ENCODE measurements at regions of chr6 and their contacts with region 1.

Region 1: GRCh38 chr6:70520575-70520974 is 46.2 kb upstream of the SDHAF4 start:
- DNase-seq: no peak
- H3K4me3 Mint-ChIP-seq: no peak overlapping the region
- H3K27ac Mint-ChIP-seq: no peak overlapping the region
- H3K4me1 Mint-ChIP-seq: no peaks in the 10 kb centered on the region
- H3K27me3 Mint-ChIP-seq: no peaks in the 10 kb centered on the region

Region 2: DNA sequence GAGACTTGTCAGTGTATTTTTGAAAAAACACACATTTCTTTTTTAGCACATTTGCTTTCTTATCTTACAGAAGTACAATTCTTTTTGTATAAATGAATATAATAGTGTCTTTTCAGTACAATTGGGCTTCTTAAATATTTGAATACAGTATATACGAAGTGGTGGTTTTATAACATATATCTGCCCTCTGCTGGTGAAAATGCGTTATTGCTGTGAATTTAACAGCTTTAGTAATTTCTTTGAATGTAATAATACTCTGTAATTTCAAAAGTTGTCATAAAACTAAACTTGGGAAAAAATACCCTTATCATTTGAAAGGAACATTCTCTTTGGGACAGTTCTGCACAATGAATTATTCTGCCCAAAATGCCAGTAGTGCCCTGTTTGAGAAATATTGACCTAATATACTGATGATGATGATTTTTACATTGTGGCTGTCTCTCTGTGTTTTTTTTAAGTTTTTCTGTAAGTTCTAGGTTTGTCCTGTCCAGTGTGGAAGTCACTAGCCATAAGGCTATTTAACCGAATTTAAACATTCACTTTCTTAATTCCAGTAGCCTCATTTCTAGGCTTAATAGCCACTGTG is 166.1 kb after region 1 on chr6:
- intact Hi-C with region 1: loop called (anchors 2 kb)
- DNase-seq: no peak
- H3K4me3 Mint-ChIP-seq: no peak overlapping the region
- H3K27ac Mint-ChIP-seq: no peak overlapping the region
- H3K4me1 Mint-ChIP-seq: peaks cover 25% of the 10 kb centered on the region
- H3K27me3 Mint-ChIP-seq: no peaks in the 10 kb centered on the region

Region 3: GRCh38 chr6:70884074-70884983 is 363.8 kb after region 1 on chr6:
- intact Hi-C with region 1: loop called (anchors 1 kb)
- DNase-seq: peak; percentile 29
- H3K4me3 Mint-ChIP-seq: no peak overlapping the region
- H3K27ac Mint-ChIP-seq: no peak overlapping the region
- H3K4me1 Mint-ChIP-seq: no peaks in the 10 kb centered on the region
- H3K27me3 Mint-ChIP-seq: peaks cover 5% of the 10 kb centered on the region